ENCODE measurements at regions of chr19 and their contacts with region 1.

Region 1: DNA sequence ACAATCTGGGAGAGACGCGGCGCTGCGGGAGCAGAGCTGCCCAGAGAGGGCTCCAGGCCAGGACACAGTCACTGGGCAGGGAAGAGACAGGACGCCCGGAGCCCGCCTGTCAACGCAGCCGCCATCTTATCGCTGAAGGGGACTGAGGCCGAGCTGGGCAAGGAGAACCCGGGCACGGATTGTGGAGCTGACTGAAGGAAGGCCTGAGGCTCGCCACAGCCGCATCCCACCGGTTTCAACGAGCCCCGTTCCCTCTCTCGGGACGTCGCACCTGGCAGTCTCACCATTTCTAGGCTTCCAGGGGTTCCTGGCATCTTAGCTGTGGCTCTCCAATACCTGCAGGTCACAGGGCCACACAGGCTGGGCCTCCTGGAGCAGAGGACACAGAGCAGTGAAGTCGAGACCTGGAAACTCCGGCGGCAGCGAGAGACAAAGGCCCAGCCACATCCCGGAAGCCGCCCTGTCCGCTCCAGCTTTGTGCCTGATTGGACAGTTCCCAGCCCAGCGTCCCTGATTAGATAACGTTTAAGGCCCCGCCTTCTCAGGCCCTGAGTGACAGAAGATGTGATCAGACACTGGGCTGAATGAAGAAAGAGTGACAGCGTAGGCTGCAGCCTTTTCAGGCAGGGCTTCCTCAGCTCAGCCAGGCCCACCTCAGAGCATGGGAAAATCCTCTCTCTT is at the start of gene ZNF91:
- DNase-seq: peak; percentile 99
- H3K4me3 Mint-ChIP-seq: peak within 1 kb of the TSS; percentile 93
- H3K27ac Mint-ChIP-seq: peak within 1 kb of the TSS; percentile 98
- H3K4me1 Mint-ChIP-seq: peaks cover 7% of the 10 kb centered on the region
- H3K27me3 Mint-ChIP-seq: no peaks in the 10 kb centered on the region
- CTCF ChIP-seq: no peak
- total RNA-seq, gene ZNF91: 15.8 and 23.4 TPM in 2 replicates

Region 2: GRCh38 chr19:23249911-23250649 is 145.1 kb before region 1 on chr19 and contains the start of gene ZNF724:
- CTCF ChIA-PET with region 1: no interaction called
- POLR2A ChIA-PET with region 1: interaction called, 6 read pairs
- intact Hi-C with region 1: loop called (anchors 2 kb)
- DNase-seq: peak; percentile 99
- H3K4me3 Mint-ChIP-seq: peak within 1 kb of the TSS; percentile 84
- H3K27ac Mint-ChIP-seq: peak within 1 kb of the TSS; percentile 73
- H3K4me1 Mint-ChIP-seq: no peaks in the 10 kb centered on the region
- H3K27me3 Mint-ChIP-seq: no peaks in the 10 kb centered on the region
- CTCF ChIP-seq: no peak
- total RNA-seq, gene ZNF724: 5.3 and 6.9 TPM in 2 replicates

Region 3: DNA sequence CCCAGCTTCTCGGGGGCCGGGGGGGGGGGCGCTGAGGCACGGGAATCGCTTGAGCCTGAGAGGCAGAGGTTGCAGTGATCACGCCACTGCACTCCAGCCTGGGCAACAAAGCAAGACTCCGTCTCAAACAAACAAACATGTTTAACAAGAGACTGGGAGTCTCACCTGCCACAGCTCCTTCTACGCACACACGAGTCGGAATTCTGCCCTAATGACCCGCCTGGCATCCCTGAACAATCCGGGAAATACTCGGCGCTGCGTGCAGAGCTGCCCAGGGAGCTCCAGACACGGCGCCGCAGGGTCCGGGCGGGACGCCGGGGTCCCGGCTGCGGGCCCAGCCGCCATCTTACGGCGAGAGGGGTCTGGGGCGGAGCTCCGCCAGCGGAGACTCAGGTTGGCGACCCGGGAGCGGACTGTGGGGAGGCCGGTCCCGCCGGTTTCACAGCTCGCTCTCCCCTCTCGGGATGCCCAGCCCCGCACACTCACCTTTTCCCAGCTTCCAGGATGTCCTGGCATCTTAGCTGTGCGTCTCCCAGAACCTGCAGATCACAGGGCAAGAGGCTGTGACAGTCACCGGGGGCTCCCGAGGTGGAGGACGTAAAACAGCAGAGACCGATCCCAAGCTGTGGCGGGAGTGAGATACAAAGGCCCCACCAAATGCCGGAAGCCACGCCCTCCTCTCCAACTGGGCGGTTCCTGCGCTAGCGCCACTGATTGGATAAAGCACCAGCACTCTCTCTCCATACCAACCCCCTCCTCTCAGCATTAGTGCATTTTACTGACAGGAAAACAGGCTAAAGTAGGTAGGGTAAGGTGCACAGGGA is 121.4 kb before region 1 on chr19:
- CTCF ChIA-PET with region 1: no interaction called
- POLR2A ChIA-PET with region 1: interaction called, 22 read pairs
- intact Hi-C with region 1: loop called (anchors 10 kb)
- DNase-seq: peak; percentile 92
- H3K4me3 Mint-ChIP-seq: peak overlapping the region; percentile 90
- H3K27ac Mint-ChIP-seq: peak overlapping the region; percentile 80
- H3K4me1 Mint-ChIP-seq: no peaks in the 10 kb centered on the region
- H3K27me3 Mint-ChIP-seq: no peaks in the 10 kb centered on the region
- CTCF ChIP-seq: no peak

Region 4: GRCh38 chr19:23324506-23324905 is 70.7 kb before region 1 on chr19:
- CTCF ChIA-PET with region 1: no interaction called
- POLR2A ChIA-PET with region 1: no interaction called
- intact Hi-C with region 1: no loop called
- DNase-seq: no peak
- H3K4me3 Mint-ChIP-seq: no peak overlapping the region
- H3K27ac Mint-ChIP-seq: no peak overlapping the region
- H3K4me1 Mint-ChIP-seq: no peaks in the 10 kb centered on the region
- H3K27me3 Mint-ChIP-seq: no peaks in the 10 kb centered on the region
- CTCF ChIP-seq: no peak

Region 5: DNA sequence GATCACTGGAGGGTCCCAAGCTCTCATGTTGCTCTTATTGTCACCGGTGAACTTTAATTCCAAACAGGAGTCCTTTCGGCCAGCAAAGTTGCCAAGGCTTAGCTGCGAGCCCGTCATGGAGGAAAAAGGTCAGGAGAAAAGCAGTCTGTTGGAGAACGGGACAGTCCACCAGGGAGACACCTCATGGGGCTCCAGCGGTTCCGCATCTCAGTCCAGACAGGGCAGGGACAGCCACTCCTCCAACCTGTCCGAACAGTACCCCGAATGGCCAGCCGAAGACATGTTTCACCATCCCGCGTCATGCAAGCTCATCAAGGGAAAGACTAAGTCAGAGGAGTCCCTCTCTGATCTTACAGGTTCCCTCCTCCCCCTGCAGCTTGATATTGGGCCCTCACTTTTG is 10.3 kb before region 1 on chr19:
- CTCF ChIA-PET with region 1: no interaction called
- POLR2A ChIA-PET with region 1: interaction called, 24 read pairs
- intact Hi-C with region 1: no loop called
- DNase-seq: no peak
- H3K4me3 Mint-ChIP-seq: no peak overlapping the region
- H3K27ac Mint-ChIP-seq: no peak overlapping the region
- H3K4me1 Mint-ChIP-seq: no peaks in the 10 kb centered on the region
- H3K27me3 Mint-ChIP-seq: no peaks in the 10 kb centered on the region
- CTCF ChIP-seq: no peak

Region 6: GRCh38 chr19:23547816-23548430 is 152.7 kb after region 1 on chr19:
- CTCF ChIA-PET with region 1: no interaction called
- POLR2A ChIA-PET with region 1: no interaction called
- intact Hi-C with region 1: no loop called
- DNase-seq: peak; percentile 65
- H3K4me3 Mint-ChIP-seq: no peak overlapping the region
- H3K27ac Mint-ChIP-seq: no peak overlapping the region
- H3K4me1 Mint-ChIP-seq: peaks cover 15% of the 10 kb centered on the region
- H3K27me3 Mint-ChIP-seq: no peaks in the 10 kb centered on the region
- CTCF ChIP-seq: no peak

Region 7: GRCh38 chr19:23686621-23687423 is 291.6 kb after region 1 on chr19 and contains the start of gene ZNF675:
- CTCF ChIA-PET with region 1: no interaction called
- POLR2A ChIA-PET with region 1: interaction called, 22 read pairs
- intact Hi-C with region 1: loop called (anchors 2 kb)
- DNase-seq: peak; percentile 96
- H3K4me3 Mint-ChIP-seq: peak within 1 kb of the TSS; percentile 98
- H3K27ac Mint-ChIP-seq: peak within 1 kb of the TSS; percentile 97
- H3K4me1 Mint-ChIP-seq: peaks cover 6% of the 10 kb centered on the region
- H3K27me3 Mint-ChIP-seq: no peaks in the 10 kb centered on the region
- CTCF ChIP-seq: no peak
- total RNA-seq, gene ZNF675: 7.9 and 8.8 TPM in 2 replicates

Region 8: GRCh38 chr19:23699082-23699761 is 304.0 kb after region 1 on chr19:
- CTCF ChIA-PET with region 1: interaction called, 3 read pairs
- POLR2A ChIA-PET with region 1: interaction called, 12 read pairs
- intact Hi-C with region 1: no loop called
- DNase-seq: peak; percentile 38
- H3K4me3 Mint-ChIP-seq: peak overlapping the region; percentile 53
- H3K27ac Mint-ChIP-seq: peak overlapping the region; percentile 35
- H3K4me1 Mint-ChIP-seq: peaks cover 12% of the 10 kb centered on the region
- H3K27me3 Mint-ChIP-seq: no peaks in the 10 kb centered on the region
- CTCF ChIP-seq: no peak

Region 9: GRCh38 chr19:24033301-24033962 is 638.3 kb after region 1 on chr19:
- CTCF ChIA-PET with region 1: no interaction called
- POLR2A ChIA-PET with region 1: interaction called, 12 read pairs
- intact Hi-C with region 1: no loop called
- DNase-seq: peak; percentile 95
- H3K4me3 Mint-ChIP-seq: peak overlapping the region; percentile 94
- H3K27ac Mint-ChIP-seq: peak overlapping the region; percentile 97
- H3K4me1 Mint-ChIP-seq: peaks cover 8% of the 10 kb centered on the region
- H3K27me3 Mint-ChIP-seq: no peaks in the 10 kb centered on the region
- CTCF ChIP-seq: no peak

Measured in MCF 10A (cell line).